ENCODE measurements at regions of chr4 and their contacts with region 1.

Region 1: GRCh38 chr4:76949276-76950051 is at the start of gene SEPTIN11:
- DNase-seq: peak; percentile 81
- H3K4me3 Mint-ChIP-seq: peak within 1 kb of the TSS; percentile 81
- H3K27ac Mint-ChIP-seq: peak within 1 kb of the TSS; percentile 59
- H3K4me1 Mint-ChIP-seq: peaks cover 13% of the 10 kb centered on the region
- H3K27me3 Mint-ChIP-seq: peaks cover 31% of the 10 kb centered on the region
- total RNA-seq, gene SEPTIN11: 24.0 TPM

Region 2: DNA sequence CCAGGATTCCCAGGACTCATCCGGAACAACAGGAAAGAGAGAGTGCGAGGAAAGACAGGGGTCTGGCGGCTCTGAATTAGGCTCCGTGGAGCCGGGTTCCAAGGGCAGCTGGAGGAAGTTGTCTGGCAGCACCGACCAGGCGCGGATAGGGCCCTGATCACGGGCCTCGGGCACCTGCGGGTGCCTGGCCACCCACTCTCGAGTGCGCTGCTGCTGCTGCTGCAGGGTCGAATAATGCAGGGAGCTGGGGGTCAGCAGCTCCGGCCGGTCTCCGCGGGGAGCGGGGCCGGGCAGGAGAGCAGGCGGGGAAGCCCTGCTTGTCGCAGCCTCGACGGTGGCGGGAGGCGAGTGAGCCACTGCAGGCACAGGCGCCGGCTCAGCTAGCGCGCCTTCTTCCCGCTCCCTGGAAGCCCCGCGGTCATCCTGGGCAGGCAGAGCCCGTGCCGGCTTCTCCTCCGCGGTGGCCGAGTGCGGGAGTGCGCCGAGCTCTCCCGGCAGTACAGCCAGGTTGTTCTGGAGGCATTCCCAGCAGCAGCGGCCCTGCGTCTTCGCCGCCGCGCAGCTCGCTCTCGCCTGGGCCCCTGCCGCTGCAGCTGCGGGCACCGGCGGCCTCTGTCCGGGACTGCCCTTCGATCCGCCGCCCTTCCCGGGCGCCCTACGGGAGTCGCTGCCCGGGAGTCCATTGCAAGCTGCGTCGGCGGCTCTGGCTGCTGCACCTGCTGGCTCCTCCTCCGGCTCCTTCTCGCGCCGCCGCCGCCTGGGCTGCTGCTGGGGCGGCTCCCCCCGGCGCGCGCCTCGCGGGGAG is 52.5 kb before region 1 on chr4:
- CTCF ChIA-PET with region 1: no interaction called
- intact Hi-C with region 1: loop called (anchors 2 kb)
- DNase-seq: peak; percentile 16
- H3K4me3 Mint-ChIP-seq: no peak overlapping the region
- H3K27ac Mint-ChIP-seq: no peak overlapping the region
- H3K4me1 Mint-ChIP-seq: peaks cover 9% of the 10 kb centered on the region
- H3K27me3 Mint-ChIP-seq: peaks cover 35% of the 10 kb centered on the region

Region 3: DNA sequence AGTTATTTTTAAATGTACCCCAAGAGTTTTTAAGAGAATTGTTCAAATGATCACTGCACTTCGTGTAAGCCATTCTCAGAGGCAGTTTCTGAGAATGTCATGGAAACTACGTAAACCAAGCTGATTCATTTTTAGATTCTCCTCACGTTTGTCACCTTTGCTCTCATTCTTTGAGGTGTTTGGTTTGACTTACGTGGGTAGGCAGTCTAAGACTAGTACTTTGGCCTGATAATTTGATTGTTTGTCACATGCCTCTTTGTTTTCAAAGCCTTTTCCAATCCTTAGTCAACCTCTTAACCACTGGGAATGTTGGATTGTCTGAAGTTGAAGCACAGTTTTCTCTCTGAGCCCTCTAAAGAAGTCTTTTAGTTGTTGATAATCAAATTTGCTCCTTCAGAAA is 10.6 kb after region 1 on chr4:
- CTCF ChIA-PET with region 1: no interaction called
- intact Hi-C with region 1: loop called (anchors 1 kb)
- DNase-seq: peak; percentile 10
- H3K4me3 Mint-ChIP-seq: no peak overlapping the region
- H3K27ac Mint-ChIP-seq: no peak overlapping the region
- H3K4me1 Mint-ChIP-seq: peaks cover 19% of the 10 kb centered on the region
- H3K27me3 Mint-ChIP-seq: peaks cover 5% of the 10 kb centered on the region

Region 4: GRCh38 chr4:76993787-76994641 is 44.5 kb after region 1 on chr4:
- CTCF ChIA-PET with region 1: interaction called, 3 read pairs
- intact Hi-C with region 1: loop called (anchors 1 kb)
- DNase-seq: peak; percentile 82
- H3K4me3 Mint-ChIP-seq: peak overlapping the region; percentile 53
- H3K27ac Mint-ChIP-seq: peak overlapping the region; percentile 65
- H3K4me1 Mint-ChIP-seq: peaks cover 57% of the 10 kb centered on the region
- H3K27me3 Mint-ChIP-seq: no peaks in the 10 kb centered on the region

Region 5: GRCh38 chr4:77193511-77194102 is 244.1 kb after region 1 on chr4:
- CTCF ChIA-PET with region 1: no interaction called
- intact Hi-C with region 1: loop called (anchors 1 kb)
- DNase-seq: peak; percentile 83
- H3K4me3 Mint-ChIP-seq: peak overlapping the region; percentile 85
- H3K27ac Mint-ChIP-seq: peak overlapping the region; percentile 59
- H3K4me1 Mint-ChIP-seq: peaks cover 13% of the 10 kb centered on the region
- H3K27me3 Mint-ChIP-seq: no peaks in the 10 kb centered on the region

Measured in activated naive CD4-positive, alpha-beta T cell treated with anti-CD3 and anti-CD28 coated beads for 36 hours (primary cell).